Breast epithelium (tissue), 4 donors: ENCODE measurements at regions of chr20 and their contacts with region 1.

Region 1: GRCh38 chr20:16241915-16242314 is 331.3 kb downstream of the KIF16B start:
- DNase-seq: no peak
- H3K4me3 ChIP-seq: no peak overlapping the region
- H3K27ac ChIP-seq: no peak overlapping the region
- H3K4me1 ChIP-seq: no peaks in the 10 kb centered on the region
- H3K27me3 ChIP-seq: no peaks in the 10 kb centered on the region
- CTCF ChIP-seq: no peak
- POLR2A ChIP-seq: no peak

Region 2: DNA sequence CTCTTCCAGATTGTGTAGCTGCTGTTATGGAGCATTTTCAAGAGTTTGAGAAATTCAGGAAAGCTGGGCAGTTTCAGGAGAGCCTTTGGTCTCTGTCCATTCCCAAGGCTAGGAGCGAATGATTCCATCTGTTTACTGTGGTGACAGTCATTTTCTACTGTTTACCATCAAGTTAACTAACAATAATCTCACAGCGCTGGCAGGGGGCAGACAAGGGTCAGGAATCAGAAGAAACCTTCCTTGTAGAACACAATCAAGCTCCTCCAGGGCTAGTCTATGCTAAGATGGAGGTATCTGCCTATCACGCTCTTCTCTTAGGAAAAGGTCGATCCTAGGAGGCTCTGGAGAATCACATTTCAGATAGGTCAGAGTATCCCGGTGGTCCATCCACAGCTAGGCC is 37.4 kb after region 1 on chr20:
- intact Hi-C with region 1: no loop called
- DNase-seq: no peak
- H3K4me3 ChIP-seq: no peak overlapping the region
- H3K27ac ChIP-seq: no peak overlapping the region
- H3K4me1 ChIP-seq: no peaks in the 10 kb centered on the region
- H3K27me3 ChIP-seq: no peaks in the 10 kb centered on the region
- CTCF ChIP-seq: no peak
- POLR2A ChIP-seq: no peak

Region 3: GRCh38 chr20:17904027-17904426 is 1662.1 kb after region 1 on chr20:
- intact Hi-C with region 1: loop called (anchors 10 kb)
- DNase-seq: no peak
- H3K4me3 ChIP-seq: no peak overlapping the region
- H3K27ac ChIP-seq: no peak overlapping the region
- H3K4me1 ChIP-seq: no peaks in the 10 kb centered on the region
- H3K27me3 ChIP-seq: no peaks in the 10 kb centered on the region
- CTCF ChIP-seq: no peak
- POLR2A ChIP-seq: no peak